ENCODE measurements at regions of chr1 and their contacts with region 1.

Region 1: DNA sequence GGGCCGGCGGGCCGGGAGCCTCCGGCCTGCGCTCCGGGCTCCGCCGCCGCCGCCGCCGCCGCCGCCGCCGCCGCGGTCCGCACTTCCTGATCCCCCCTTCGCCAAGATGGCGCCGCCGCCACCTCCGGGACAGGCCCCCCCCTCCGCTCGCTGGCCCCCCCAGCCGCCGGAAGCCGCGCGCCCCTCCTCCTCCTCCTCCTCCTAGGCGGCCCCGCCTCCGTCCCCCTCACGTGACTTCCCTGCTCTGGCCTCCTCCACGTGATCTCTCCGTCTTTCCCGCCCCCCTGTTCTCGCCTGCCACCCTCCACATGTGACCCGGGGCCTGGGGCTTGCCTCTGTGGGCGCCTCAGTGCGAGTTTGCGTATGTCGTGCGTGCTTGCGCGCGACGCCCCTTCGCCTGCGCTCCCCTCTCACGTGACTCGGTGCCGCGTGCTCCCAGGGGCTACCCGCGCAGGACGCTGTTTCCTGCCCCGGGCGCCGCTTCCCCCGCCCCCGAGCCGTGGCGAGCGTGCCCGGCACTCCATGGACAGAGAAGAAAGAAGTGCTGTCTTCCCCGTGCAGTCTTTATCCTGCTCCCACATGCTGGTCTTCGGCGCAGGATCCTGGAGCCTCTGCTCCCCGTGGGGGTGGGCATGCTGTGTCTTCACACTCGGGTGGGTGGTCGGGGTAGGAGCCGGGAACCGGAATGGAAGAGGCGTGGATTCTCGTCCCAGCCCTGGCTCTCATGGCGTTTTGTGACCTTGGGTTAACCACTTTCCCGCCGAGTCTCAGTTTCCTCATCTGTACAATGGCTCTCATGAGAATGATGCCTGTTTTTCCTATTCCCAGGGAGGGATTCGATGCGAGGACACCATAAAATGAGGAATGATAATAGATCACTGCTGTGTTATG is at the start of gene UBE2Q1:
- DNase-seq: peak; percentile 96
- ATAC-seq: peak; percentile 93
- H3K4me3 ChIP-seq: peak within 1 kb of the TSS; percentile 81 to 85
- H3K27ac ChIP-seq: peak within 1 kb of the TSS; percentile 91
- H3K4me1 ChIP-seq: peaks cover 11 to 34% of the 10 kb centered on the region in 2 experiments
- H3K27me3 ChIP-seq: no peaks in the 10 kb centered on the region
- CTCF ChIP-seq: no peak
- POLR2A ChIP-seq: peak; percentile 18
- RAD21 ChIP-seq: no peak
- total RNA-seq, gene UBE2Q1: 70.9 TPM

Region 2: DNA sequence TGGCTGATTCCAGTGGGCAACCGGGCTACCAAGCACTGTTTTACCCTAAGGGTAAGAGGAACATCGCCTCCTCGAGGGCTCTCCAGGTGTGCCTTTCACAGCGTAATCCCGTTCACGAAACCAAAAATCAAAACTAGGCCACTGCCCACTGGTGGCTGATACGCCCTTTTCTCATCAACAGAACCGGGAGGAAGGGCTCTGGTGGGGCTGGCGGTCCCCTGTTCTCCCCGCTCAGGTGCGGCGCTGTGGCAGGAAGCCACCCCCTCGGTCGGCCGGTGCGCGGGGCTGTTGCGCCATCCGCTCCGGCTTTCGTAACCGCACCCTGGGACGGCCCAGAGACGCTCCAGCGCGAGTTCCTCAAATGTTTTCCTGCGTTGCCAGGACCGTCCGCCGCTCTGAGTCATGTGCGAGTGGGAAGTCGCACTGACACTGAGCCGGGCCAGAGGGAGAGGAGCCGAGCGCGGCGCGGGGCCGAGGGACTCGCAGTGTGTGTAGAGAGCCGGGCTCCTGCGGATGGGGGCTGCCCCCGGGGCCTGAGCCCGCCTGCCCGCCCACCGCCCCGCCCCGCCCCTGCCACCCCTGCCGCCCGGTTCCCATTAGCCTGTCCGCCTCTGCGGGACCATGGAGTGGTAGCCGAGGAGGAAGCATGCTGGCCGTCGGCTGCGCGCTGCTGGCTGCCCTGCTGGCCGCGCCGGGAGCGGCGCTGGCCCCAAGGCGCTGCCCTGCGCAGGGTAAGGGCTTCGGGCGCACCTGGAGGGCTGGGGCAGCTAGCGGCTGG is 153.6 kb before region 1 on chr1 and contains the start of gene IL6R:
- CTCF ChIA-PET with region 1: no interaction called
- POLR2A ChIA-PET with region 1: no interaction called
- RAD21 ChIA-PET with region 1: no interaction called
- intact Hi-C with region 1: loop called (anchors 5 kb)
- DNase-seq: peak; percentile 82
- ATAC-seq: peak; percentile 82
- H3K4me3 ChIP-seq: peak within 1 kb of the TSS; percentile 61 to 65
- H3K27ac ChIP-seq: peak within 1 kb of the TSS; percentile 69
- H3K4me1 ChIP-seq: peaks cover 30 to 36% of the 10 kb centered on the region in 2 experiments
- H3K27me3 ChIP-seq: no peaks in the 10 kb centered on the region; the same call in 1 of the 2 replicates
- CTCF ChIP-seq: peak; percentile 45 to 91 (median 55); a peak in 5 of 6 replicates
- POLR2A ChIP-seq: no peak
- RAD21 ChIP-seq: peak; percentile 91
- total RNA-seq, gene IL6R: 6.8 TPM

Region 3: DNA sequence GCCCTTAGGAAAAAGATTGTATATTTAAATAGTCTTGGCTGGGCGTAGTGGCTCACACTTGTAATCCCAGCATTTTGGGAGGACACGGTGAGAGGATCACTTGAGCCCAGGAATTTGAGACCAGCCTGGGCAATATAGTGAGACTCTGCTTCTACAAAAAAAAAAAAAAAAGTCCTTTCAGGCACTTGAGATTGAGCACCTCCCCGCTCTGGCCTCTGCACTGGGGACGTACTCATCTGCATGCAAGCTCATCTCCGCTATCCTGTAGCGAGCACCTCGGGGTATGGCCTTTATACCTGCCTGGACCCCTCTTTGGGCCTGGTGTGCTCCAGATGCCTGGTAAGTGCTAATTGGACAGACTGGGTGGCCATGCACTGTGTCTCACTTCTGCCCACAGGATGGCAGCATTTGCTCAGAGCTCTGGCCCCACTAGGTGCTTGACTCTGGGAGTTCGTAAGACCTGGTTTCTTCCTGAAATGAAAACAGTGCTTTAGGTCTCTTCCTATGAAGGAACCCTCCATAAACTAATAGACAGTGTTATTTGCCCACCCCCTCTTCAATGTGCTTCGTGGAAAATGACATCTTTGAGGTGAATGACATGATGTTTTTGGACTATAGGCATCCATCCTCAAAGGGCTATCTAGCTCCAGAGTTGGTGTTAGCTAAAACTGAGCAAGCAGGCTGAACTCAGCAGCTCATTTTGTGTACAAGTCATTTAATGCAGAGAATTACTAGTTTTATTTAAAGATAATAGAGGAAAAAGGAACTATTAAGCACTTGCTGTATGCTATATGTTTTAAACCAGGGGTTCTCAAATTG is 110.9 kb after region 1 on chr1:
- CTCF ChIA-PET with region 1: interaction called, 5 read pairs
- POLR2A ChIA-PET with region 1: no interaction called
- RAD21 ChIA-PET with region 1: interaction called in 1 of 2 experiments, 3 read pairs
- intact Hi-C with region 1: loop called (anchors 10 kb)
- DNase-seq: peak; percentile 67
- ATAC-seq: peak; percentile 100
- H3K4me3 ChIP-seq: no peak overlapping the region
- H3K27ac ChIP-seq: no peak overlapping the region
- H3K4me1 ChIP-seq: peaks cover 0 to 3% of the 10 kb centered on the region in 2 experiments; a peak in 1 of 4 replicates
- H3K27me3 ChIP-seq: no peaks in the 10 kb centered on the region
- CTCF ChIP-seq: peak; percentile 86 to 95 (median 93)
- POLR2A ChIP-seq: no peak
- RAD21 ChIP-seq: peak; percentile 98

Region 4: GRCh38 chr1:154760469-154760933 is 201.7 kb after region 1 on chr1:
- CTCF ChIA-PET with region 1: interaction called, 11 read pairs
- POLR2A ChIA-PET with region 1: no interaction called
- RAD21 ChIA-PET with region 1: no interaction called
- intact Hi-C with region 1: loop called (anchors 2 kb)
- DNase-seq: peak; percentile 28
- ATAC-seq: peak; percentile 99
- H3K4me3 ChIP-seq: peak overlapping the region; percentile 17 to 42
- H3K27ac ChIP-seq: no peak overlapping the region
- H3K4me1 ChIP-seq: peaks cover 4 to 10% of the 10 kb centered on the region in 2 experiments; a peak in 3 of 4 replicates
- H3K27me3 ChIP-seq: peaks cover 17% of the 10 kb centered on the region
- CTCF ChIP-seq: peak; percentile 71 to 85 (median 74)
- POLR2A ChIP-seq: no peak
- RAD21 ChIP-seq: peak; percentile 66

Region 5: DNA sequence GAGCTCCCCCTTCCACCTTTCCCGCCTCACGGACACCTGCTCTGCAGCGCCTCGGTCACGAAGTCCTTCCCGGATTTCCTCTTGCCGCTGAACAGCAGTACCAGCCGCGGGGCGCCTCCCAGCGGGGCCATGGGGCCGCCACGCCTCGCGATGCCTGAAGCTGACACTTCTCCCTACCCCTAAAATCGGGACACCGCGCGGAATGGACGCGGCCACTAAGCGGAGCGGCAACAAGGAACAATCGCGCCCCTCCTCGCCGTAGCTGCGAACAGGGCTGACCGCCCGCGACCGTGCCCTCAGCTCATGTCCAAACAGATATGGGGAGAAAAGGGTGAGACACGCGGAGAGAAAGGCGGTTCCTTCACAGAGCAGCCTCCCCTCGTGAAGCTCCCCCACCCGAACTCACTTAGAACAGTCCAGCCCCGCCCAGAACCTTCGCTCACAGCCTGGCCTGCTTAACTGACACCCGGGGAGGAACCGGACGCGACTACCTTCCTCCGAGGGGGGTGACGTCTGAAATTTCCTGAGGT is 377.8 kb after region 1 on chr1 and contains the start of gene PMVK:
- CTCF ChIA-PET with region 1: interaction called, 10 read pairs
- POLR2A ChIA-PET with region 1: no interaction called
- RAD21 ChIA-PET with region 1: no interaction called
- intact Hi-C with region 1: no loop called
- DNase-seq: peak; percentile 96
- ATAC-seq: peak; percentile 80
- H3K4me3 ChIP-seq: peak within 1 kb of the TSS; percentile 58 to 62
- H3K27ac ChIP-seq: peak within 1 kb of the TSS; percentile 67
- H3K4me1 ChIP-seq: peaks cover 26 to 60% of the 10 kb centered on the region in 2 experiments
- H3K27me3 ChIP-seq: no peaks in the 10 kb centered on the region
- CTCF ChIP-seq: peak in 2 of 3 experiments; percentile 17 to 18; a peak in 1 of 6 replicates
- POLR2A ChIP-seq: peak; percentile 76
- RAD21 ChIP-seq: no peak
- total RNA-seq, gene PMVK: 24.0 TPM

Region 6: DNA sequence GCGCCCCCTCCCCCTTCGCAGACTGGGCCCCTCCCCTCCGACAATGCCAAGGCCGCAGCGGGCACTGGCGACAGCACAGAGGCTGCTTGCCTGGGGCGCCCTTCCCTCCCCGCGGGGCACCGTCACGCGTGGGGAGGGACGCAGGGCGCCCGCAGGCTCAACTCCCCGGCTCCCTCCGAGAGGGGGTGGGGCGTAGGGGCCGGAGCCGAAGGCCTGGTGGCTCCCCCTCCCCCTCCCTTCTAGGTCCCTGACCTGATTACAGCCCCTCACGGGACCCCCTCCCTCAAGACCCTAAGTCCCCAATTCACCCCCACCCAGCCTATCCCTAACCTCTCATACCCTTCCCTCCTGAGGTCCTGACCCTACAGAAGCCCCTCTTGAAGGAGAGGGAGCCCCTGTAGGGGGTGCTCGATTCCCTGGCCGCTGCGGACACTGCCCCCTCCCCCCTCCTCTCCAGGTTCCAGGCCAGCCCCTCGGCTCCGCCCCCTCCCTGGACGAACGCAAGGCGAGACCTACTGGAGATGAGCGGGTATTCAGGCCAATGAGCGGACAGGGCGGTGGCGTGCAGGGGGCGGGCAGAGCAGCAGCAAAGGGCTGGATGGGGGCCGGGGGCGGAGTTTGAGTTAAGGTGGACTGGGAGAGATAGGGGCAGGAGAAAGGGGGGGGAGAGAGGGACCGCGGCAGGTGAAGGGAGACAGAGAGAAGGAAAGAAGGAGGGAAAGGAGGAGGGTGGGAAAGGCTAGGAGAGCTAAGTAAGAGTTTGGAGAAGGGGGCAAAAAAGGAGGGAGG is 443.0 kb after region 1 on chr1:
- CTCF ChIA-PET with region 1: interaction called, 4 read pairs
- POLR2A ChIA-PET with region 1: no interaction called
- RAD21 ChIA-PET with region 1: no interaction called
- intact Hi-C with region 1: loop called (anchors 2 kb)
- DNase-seq: peak; percentile 99
- ATAC-seq: peak; percentile 72
- H3K4me3 ChIP-seq: peak overlapping the region; percentile 85 to 98
- H3K27ac ChIP-seq: peak overlapping the region; percentile 99
- H3K4me1 ChIP-seq: peaks cover 22 to 66% of the 10 kb centered on the region in 2 experiments
- H3K27me3 ChIP-seq: no peaks in the 10 kb centered on the region
- CTCF ChIP-seq: peak in 2 of 3 experiments; percentile 52; a peak in 4 of 6 replicates
- POLR2A ChIP-seq: no peak
- RAD21 ChIP-seq: no peak

Region 7: GRCh38 chr1:155084722-155085503 is 526.1 kb after region 1 on chr1:
- CTCF ChIA-PET with region 1: interaction called, 5 read pairs
- POLR2A ChIA-PET with region 1: no interaction called
- RAD21 ChIA-PET with region 1: no interaction called
- intact Hi-C with region 1: loop called (anchors 5 kb)
- DNase-seq: peak; percentile 88
- ATAC-seq: peak; percentile 81
- H3K4me3 ChIP-seq: peak overlapping the region; percentile 61 to 67
- H3K27ac ChIP-seq: peak overlapping the region; percentile 67
- H3K4me1 ChIP-seq: peaks cover 29 to 60% of the 10 kb centered on the region in 2 experiments
- H3K27me3 ChIP-seq: no peaks in the 10 kb centered on the region
- CTCF ChIP-seq: peak in 2 of 3 experiments; percentile 86 to 87; a peak in 4 of 6 replicates
- POLR2A ChIP-seq: no peak
- RAD21 ChIP-seq: no peak